Activated T-helper 2 cell treated with anti-CD3 and anti-CD28 coated beads, Interferon-gamma antibody, Interleukin-2, Interleukin-4, amounts not matched to agents 10 μg/mL and 5 μg/mL and 100 μg/mL, durations not matched to agents 14 hours and 24 hours and 36 hours (primary cell): ENCODE measurements at regions of chrX and their contacts with region 1.

Region 1: DNA sequence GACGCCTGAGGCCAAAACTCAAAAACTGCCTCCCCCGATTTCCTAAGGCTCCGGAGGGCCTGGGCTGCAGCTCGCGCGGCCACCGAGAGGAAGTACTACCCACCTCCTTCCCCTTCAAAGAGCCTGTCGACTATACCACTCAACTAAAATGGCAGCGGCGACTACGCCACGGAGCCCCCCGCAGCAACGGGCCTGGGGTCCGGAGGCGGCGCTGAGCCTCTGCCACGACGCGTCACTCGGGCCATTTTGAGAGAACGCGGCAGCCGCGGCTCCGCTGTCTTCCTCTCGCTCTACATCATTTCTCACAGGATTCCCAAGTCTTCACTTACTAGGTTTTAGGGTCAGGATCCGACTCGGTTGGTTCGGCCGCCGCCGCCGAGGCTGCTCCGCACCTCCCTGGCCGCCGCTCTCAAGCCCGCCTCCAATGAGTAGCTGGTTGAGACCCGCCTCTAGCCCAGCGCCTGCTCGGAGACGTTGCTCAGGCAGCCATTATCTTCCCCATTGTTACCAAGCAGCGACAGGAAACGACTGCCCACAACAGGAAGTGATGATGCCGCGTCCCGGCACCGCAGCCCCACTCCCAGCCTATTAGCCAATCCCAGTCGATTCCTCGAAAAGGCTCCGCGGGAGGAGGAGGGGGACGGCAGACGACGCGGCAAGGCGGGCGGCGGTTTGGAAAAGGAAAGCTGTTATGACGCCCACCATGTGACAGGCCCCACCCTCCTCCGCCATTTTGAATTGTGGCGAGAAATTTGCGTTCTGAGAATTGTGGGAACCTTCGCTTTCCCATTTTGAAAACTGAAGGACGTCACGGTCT is at the start of gene RLIM:
- DNase-seq: peak; percentile 90
- H3K4me3 Mint-ChIP-seq: peak within 1 kb of the TSS; percentile 100
- H3K27ac Mint-ChIP-seq: peak within 1 kb of the TSS; percentile 100
- H3K4me1 Mint-ChIP-seq: peaks cover 9% of the 10 kb centered on the region
- H3K27me3 Mint-ChIP-seq: no peaks in the 10 kb centered on the region
- total RNA-seq, gene RLIM: 37.6 and 38.7 TPM in 2 replicates

Region 2: GRCh38 chrX:73943693-73944562 is 670.4 kb before region 1 on chrX:
- intact Hi-C with region 1: loop called (anchors 10 kb)
- DNase-seq: peak; percentile 77
- H3K4me3 Mint-ChIP-seq: peak overlapping the region; percentile 83
- H3K27ac Mint-ChIP-seq: peak overlapping the region; percentile 89
- H3K4me1 Mint-ChIP-seq: peaks cover 11% of the 10 kb centered on the region
- H3K27me3 Mint-ChIP-seq: no peaks in the 10 kb centered on the region

Region 3: DNA sequence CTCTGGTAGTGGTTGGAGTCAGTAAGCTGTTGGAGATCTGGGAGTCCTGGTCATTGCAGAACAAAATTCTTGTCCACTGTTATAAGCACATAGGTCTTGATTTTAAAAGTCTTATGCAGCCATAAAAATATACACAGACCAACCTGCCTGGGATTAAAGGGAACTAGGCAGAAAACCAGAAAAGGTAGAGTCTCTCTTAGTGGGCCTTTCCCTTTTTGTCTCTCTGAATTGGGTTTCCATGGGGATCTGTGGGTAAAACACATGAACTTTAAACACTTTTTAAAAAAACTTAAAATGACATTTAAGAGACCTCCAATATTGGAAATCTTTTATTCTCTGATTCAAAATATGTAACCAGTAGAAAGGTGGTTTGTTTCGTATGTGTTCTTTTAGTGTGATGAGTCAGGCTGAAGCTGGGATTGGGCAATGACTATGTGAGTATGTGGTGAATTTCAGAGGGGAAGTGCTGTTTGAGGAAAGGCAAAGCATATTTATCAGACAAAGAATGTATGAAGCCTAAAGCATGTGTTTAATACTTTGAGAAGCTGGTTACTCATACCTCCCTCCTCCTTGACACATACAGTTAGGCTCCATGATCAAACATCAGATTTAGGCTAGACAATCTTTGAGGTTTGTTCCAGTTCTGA is 163.4 kb before region 1 on chrX:
- intact Hi-C with region 1: loop called (anchors 1 kb)
- DNase-seq: no peak
- H3K4me3 Mint-ChIP-seq: no peak overlapping the region
- H3K27ac Mint-ChIP-seq: peak overlapping the region; percentile 80
- H3K4me1 Mint-ChIP-seq: peaks cover 18% of the 10 kb centered on the region
- H3K27me3 Mint-ChIP-seq: no peaks in the 10 kb centered on the region

Region 4: GRCh38 chrX:74579597-74580198 is 34.6 kb before region 1 on chrX:
- intact Hi-C with region 1: loop called (anchors 1 kb)
- DNase-seq: no peak
- H3K4me3 Mint-ChIP-seq: no peak overlapping the region
- H3K27ac Mint-ChIP-seq: peak overlapping the region; percentile 75
- H3K4me1 Mint-ChIP-seq: peaks cover 11% of the 10 kb centered on the region
- H3K27me3 Mint-ChIP-seq: no peaks in the 10 kb centered on the region

Region 5: DNA sequence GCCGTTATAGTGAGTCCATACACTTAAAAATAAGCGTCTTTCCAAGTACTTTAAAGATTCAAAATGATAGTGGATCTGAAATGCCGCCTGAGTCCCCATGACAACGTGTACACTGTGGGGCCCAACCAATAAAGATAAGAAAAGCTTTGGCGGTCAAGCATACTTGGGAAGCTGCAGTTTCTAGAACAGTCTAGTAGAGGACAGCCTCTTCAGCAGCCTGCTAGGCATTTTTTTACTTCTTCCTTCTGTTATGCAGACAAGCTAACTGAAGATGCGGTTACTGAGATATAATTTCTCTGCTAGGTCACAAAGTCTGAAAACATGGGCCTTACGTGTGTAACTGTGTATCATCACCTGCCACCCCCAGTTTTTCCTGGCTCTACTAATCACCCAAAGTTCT is 659.2 kb after region 1 on chrX:
- intact Hi-C with region 1: loop called (anchors 1 kb)
- DNase-seq: no peak
- H3K4me3 Mint-ChIP-seq: peak overlapping the region; percentile 95
- H3K27ac Mint-ChIP-seq: peak overlapping the region; percentile 97
- H3K4me1 Mint-ChIP-seq: peaks cover 33% of the 10 kb centered on the region
- H3K27me3 Mint-ChIP-seq: no peaks in the 10 kb centered on the region